ENCODE measurements at regions of chr20 and their contacts with region 1.

Region 1: DNA sequence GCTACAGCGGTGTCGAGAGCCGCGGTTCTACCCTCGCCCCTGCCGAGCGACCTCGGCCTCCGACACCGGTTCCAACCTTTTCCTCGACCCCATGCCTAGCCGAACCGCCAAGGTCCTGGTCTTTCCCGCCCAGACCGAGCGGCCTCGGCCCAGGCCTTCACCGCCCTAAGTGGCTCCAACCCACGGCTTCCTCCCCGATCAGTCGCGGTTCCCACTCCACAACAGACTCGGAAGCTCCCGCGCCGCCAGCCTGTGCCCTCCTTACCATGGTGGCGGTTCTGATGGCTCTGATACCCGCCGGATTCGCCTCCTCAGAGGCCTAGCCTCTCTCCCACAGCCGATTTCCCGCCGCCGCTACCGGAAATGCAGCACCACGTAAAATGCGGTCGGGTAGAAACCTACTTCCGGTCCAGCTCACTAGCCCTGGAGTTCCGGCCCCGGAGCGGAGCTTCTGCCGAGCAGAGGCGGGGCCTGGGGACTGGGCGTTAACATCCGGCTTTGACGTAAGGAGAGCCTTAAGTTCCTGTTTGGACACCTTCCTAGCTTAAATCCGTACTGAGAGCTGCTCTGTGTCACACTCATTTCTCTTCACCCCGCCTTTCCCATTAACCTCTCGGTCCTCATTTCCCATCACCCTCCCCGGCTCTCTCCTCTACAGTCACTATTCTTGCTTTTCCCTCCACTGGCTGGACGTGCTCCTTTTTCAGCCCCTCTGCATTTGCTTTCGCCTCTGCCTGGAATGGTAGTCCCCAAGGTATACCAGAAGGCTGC is at the start of gene SNRPB:
- DNase-seq: peak; percentile 99
- H3K4me3 Mint-ChIP-seq: peak within 1 kb of the TSS; percentile 100
- H3K27ac Mint-ChIP-seq: peak within 1 kb of the TSS; percentile 100
- H3K4me1 Mint-ChIP-seq: peaks cover 48% of the 10 kb centered on the region
- H3K27me3 Mint-ChIP-seq: no peaks in the 10 kb centered on the region
- total RNA-seq, gene SNRPB: 567 and 568 TPM in 2 replicates

Region 2: GRCh38 chr20:2101865-2102584 is 368.6 kb before region 1 on chr20:
- intact Hi-C with region 1: loop called (anchors 2 kb)
- DNase-seq: peak; percentile 96
- H3K4me3 Mint-ChIP-seq: peak overlapping the region; percentile 97
- H3K27ac Mint-ChIP-seq: peak overlapping the region; percentile 99
- H3K4me1 Mint-ChIP-seq: peaks cover 39% of the 10 kb centered on the region
- H3K27me3 Mint-ChIP-seq: peaks cover 11% of the 10 kb centered on the region

Region 3: DNA sequence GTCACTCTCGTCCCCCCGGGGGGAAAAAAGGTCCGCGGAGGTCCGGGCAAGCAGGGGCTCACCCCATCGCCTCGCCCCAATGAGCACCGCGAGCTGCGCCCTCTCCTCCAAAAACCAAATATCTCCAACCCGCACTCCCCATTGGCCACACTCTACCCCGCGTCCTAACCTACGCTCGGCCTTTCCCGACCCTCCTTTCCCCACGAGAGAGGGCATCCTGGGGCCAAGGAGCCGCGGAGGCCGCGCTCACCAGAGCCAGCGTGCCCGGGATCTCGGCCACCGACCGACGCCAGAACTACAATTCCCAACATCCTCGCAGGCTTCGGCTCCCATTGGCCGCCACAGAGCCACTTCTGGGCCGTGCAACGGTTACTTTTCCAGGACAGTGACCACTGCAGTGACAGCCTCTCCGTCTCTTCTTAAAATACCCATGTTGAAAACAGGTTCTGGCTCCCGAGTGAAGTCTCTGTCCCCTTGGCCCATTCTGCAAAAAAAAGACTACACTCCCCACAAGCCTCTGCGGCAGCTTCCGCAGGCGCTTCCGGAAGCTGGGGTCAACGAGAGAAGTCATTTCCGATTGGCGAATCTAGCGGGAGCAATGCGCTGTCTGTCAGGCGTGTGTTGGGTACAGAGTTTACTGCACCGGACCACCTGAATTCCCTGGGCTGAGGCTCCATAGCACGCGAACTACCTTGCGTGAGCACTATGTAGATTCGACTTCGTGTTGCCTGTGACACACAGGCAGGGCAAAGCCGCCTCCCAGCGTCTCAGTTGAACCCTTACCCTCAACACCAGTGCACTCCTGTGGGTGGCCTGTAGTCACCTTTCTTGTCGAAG is 38.2 kb after region 1 on chr20 and contains the start of gene ZNF343:
- intact Hi-C with region 1: loop called (anchors 1 kb)
- DNase-seq: peak; percentile 94
- H3K4me3 Mint-ChIP-seq: peak within 1 kb of the TSS; percentile 99
- H3K27ac Mint-ChIP-seq: peak within 1 kb of the TSS; percentile 98
- H3K4me1 Mint-ChIP-seq: peaks cover 13% of the 10 kb centered on the region
- H3K27me3 Mint-ChIP-seq: peaks cover 20% of the 10 kb centered on the region
- total RNA-seq, gene ZNF343: 18.9 and 21.4 TPM in 2 replicates

Region 4: GRCh38 chr20:2651772-2652723 is 181.4 kb after region 1 on chr20 and contains the start of gene NOP56:
- intact Hi-C with region 1: loop called (anchors 2 kb)
- DNase-seq: peak; percentile 99
- H3K4me3 Mint-ChIP-seq: peak within 1 kb of the TSS; percentile 94
- H3K27ac Mint-ChIP-seq: peak within 1 kb of the TSS; percentile 92
- H3K4me1 Mint-ChIP-seq: peaks cover 32% of the 10 kb centered on the region
- H3K27me3 Mint-ChIP-seq: no peaks in the 10 kb centered on the region
- total RNA-seq, gene NOP56: 884 and 899 TPM in 2 replicates

Region 5: DNA sequence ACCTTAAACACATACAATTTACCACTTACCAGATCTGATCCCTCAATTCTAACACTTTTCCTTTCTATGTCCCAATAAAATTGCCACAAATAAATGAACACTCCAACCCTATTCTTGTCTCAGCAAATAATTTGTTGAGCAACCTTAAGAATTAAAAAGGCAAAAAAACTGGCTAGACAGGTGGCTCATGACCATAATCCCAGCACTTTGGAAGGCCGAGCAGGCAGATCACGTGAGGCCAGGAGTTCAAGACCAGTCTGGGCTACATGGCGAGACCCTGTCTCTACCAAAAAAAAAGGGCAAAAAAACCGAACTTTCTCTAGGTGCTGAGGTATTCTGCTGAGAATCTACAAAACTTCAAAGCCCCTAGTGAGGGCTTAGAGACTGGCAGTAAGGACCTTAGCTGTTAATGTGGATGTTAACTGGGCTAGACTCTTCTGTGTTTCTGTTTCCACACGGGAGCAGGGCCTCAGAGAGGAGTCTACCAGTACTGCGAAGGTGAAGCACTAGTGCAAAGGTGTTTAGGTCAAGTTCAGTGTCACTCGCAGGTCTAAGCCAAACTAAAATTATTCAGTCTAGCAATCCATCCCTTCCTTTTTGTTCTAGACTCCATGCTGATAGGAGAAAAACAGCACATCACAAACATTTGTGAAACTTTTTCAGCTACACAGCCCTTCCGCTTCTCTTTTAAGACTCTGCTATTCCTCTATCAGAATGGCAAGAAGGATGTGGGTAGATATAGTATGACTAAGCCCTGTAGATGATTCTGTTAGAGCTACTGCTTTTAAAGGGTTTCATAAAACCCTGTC is 686.4 kb after region 1 on chr20:
- intact Hi-C with region 1: loop called (anchors 5 kb)
- DNase-seq: peak; percentile 77
- H3K4me3 Mint-ChIP-seq: peak overlapping the region; percentile 92
- H3K27ac Mint-ChIP-seq: peak overlapping the region; percentile 81
- H3K4me1 Mint-ChIP-seq: peaks cover 44% of the 10 kb centered on the region
- H3K27me3 Mint-ChIP-seq: no peaks in the 10 kb centered on the region